Heart left ventricle (tissue), 16 donors: ENCODE measurements at regions of chr10 and their contacts with region 1.

Region 1: GRCh38 chr10:49300140-49300974 is 1.4 kb downstream of the C10orf71 start:
- DNase-seq: peak; percentile 77 to 89 (median 79)
- ATAC-seq: peak; percentile 71 to 82 (median 80)
- H3K4me3 ChIP-seq: peak overlapping the region; percentile 34 to 71 (median 58)
- H3K27ac ChIP-seq: peak overlapping the region; percentile 80 to 99 (median 94)
- H3K4me1 ChIP-seq: peaks cover 0 to 88% (median 62%) of the 10 kb centered on the region in 12 donors
- H3K27me3 ChIP-seq: no peaks in the 10 kb centered on the region
- CTCF ChIP-seq: peak in 5 of 12 donors; percentile 11 to 34 (median 20)
- POLR2A ChIP-seq: no peak

Region 2: GRCh38 chr10:49187950-49188761 is 112.2 kb before region 1 on chr10 and contains the start of gene TMEM273:
- intact Hi-C with region 1: loop called in 3 of 10 experiments (anchors 2 to 5 kb)
- DNase-seq: peak; percentile 87 to 92 (median 90)
- ATAC-seq: peak; percentile 96 to 98 (median 96)
- H3K4me3 ChIP-seq: peak within 1 kb of the TSS in 11 of 12 donors; percentile 12 to 61 (median 50)
- H3K27ac ChIP-seq: peak within 1 kb of the TSS; percentile 35 to 88 (median 78)
- H3K4me1 ChIP-seq: peaks cover 0 to 82% (median 49%) of the 10 kb centered on the region in 12 donors
- H3K27me3 ChIP-seq: no peaks in the 10 kb centered on the region
- CTCF ChIP-seq: peak in 3 of 12 donors; percentile 7 to 35 (median 17)
- POLR2A ChIP-seq: peak in 1 of 2 donors; percentile 47
- total RNA-seq, gene TMEM273: 7.9 to 38.7 (median 16.5) TPM

Region 3: DNA sequence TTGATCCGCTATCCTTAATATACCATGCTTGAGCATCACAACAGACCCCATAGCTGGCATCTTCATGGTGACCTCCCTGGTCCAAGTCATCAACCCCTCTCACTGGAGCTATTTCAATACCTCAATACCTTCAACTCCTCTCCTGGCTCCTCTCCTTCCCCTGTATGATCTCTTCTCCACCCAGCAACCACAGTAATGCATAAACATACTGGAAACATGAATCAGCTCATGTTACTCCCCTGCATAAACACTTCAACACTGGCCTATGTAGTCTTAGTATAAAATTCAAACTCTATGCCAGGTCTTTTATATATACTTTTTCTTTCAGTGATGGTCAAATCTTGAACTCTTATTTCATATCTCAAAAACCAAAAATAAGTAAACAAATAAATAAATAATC is 80.3 kb before region 1 on chr10:
- intact Hi-C with region 1: loop called in 3 of 10 experiments (anchors 2 to 5 kb)
- DNase-seq: no peak
- ATAC-seq: no peak
- H3K4me3 ChIP-seq: no peak overlapping the region
- H3K27ac ChIP-seq: no peak overlapping the region
- H3K4me1 ChIP-seq: peaks cover 0 to 9% (median 0%) of the 10 kb centered on the region in 12 donors
- H3K27me3 ChIP-seq: no peaks in the 10 kb centered on the region
- CTCF ChIP-seq: no peak
- POLR2A ChIP-seq: no peak

Region 4: DNA sequence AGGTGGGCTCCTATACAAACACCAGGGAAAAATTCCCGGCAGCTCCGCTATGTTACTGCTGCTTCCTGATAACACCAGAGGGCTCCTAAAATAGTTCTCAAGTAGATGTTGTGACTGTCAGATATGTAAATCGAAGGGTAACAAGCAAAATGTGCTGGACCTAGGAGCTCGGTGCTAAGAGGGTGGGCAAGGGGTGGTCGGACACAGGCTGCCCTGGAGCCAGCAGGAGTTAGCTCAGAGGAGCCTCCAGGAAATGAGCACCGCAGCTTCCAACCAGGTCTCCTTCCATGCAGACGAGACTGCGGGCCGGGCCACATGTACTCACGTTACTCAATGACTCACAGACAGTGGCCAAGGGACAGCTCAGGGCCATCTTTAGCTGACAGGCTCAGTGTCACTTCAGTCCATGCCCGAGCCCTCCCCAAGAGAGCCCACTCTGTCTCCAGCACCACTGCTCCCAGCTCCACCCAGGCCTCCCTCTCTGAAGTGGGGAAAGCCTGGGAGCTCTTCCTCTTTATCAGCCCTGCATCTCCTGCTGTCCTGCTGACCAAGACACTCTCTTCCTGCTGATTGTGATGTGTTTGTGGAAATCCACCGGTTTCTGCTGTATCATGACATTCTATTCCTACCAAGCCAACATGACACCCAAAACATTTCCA is 75.0 kb before region 1 on chr10:
- intact Hi-C with region 1: loop called in 2 of 10 experiments (anchors 5 kb)
- DNase-seq: peak in 3 of 5 donors; percentile 49 to 70 (median 52)
- ATAC-seq: peak; percentile 72 to 87 (median 82)
- H3K4me3 ChIP-seq: no peak overlapping the region
- H3K27ac ChIP-seq: peak overlapping the region in 7 of 12 donors; percentile 9 to 64 (median 48)
- H3K4me1 ChIP-seq: peaks cover 0 to 26% (median 2%) of the 10 kb centered on the region in 12 donors
- H3K27me3 ChIP-seq: no peaks in the 10 kb centered on the region
- CTCF ChIP-seq: no peak
- POLR2A ChIP-seq: no peak

Region 5: GRCh38 chr10:49242604-49243003 is 57.8 kb before region 1 on chr10:
- intact Hi-C with region 1: loop called in 1 of 10 experiments (anchors 5 kb)
- DNase-seq: peak; percentile 58 to 81 (median 75)
- ATAC-seq: peak; percentile 90 to 92 (median 91)
- H3K4me3 ChIP-seq: no peak overlapping the region
- H3K27ac ChIP-seq: peak overlapping the region in 7 of 12 donors; percentile 18 to 65 (median 41)
- H3K4me1 ChIP-seq: peaks cover 0 to 41% (median 18%) of the 10 kb centered on the region in 12 donors
- H3K27me3 ChIP-seq: no peaks in the 10 kb centered on the region
- CTCF ChIP-seq: no peak
- POLR2A ChIP-seq: no peak

Region 6: GRCh38 chr10:49272251-49273081 is 27.9 kb before region 1 on chr10:
- intact Hi-C with region 1: loop called in 1 of 10 experiments (anchors 2 kb)
- DNase-seq: peak; percentile 79 to 87 (median 81)
- ATAC-seq: peak; percentile 72 to 89 (median 79)
- H3K4me3 ChIP-seq: no peak overlapping the region
- H3K27ac ChIP-seq: peak overlapping the region; percentile 50 to 89 (median 80)
- H3K4me1 ChIP-seq: peaks cover 0 to 38% (median 29%) of the 10 kb centered on the region in 12 donors
- H3K27me3 ChIP-seq: no peaks in the 10 kb centered on the region
- CTCF ChIP-seq: no peak
- POLR2A ChIP-seq: no peak

Region 7: DNA sequence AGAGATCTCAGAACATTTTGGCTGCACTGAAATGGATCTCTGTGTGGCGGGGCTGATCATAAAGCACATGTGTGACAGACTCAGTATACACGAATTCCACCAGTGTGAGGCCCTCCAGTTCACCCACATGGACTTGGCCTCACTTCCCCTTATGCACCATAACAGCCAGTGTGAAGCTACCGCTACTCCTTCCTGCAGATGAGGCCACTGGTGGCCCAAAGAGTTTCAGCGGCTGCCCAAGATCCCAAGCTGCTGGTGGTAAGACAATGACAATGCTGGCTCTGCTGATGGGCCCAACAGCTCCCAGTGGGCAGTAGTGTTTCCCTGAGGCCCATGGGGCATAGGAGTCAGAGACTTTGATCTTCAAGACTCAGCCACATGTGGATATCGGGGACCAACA is 22.4 kb before region 1 on chr10:
- intact Hi-C with region 1: loop called in 3 of 10 experiments (anchors 2 kb)
- DNase-seq: peak in 1 of 5 donors; percentile 7
- ATAC-seq: peak in 2 of 4 donors; percentile 8 to 16
- H3K4me3 ChIP-seq: no peak overlapping the region
- H3K27ac ChIP-seq: peak overlapping the region in 11 of 12 donors; percentile 26 to 90 (median 73)
- H3K4me1 ChIP-seq: peaks cover 0 to 42% (median 29%) of the 10 kb centered on the region in 12 donors
- H3K27me3 ChIP-seq: no peaks in the 10 kb centered on the region
- CTCF ChIP-seq: no peak
- POLR2A ChIP-seq: no peak